IMR-90 (cell line): ENCODE measurements at regions of chr2 and their contacts with region 1.

Region 1: GRCh38 chr2:221429741-221430491 is 142.2 kb downstream of the EPHA4 start:
- DNase-seq: peak; percentile 52
- ATAC-seq: no peak; the same call in 1 of the 2 replicates
- H3K4me3 ChIP-seq: no peak overlapping the region
- H3K27ac ChIP-seq: no peak overlapping the region
- H3K4me1 ChIP-seq: peaks cover 3% of the 10 kb centered on the region; the same call in 1 of the 2 replicates
- H3K27me3 ChIP-seq: no peaks in the 10 kb centered on the region
- CTCF ChIP-seq: no peak
- POLR2A ChIP-seq: no peak
- RAD21 ChIP-seq: no peak

Region 2: DNA sequence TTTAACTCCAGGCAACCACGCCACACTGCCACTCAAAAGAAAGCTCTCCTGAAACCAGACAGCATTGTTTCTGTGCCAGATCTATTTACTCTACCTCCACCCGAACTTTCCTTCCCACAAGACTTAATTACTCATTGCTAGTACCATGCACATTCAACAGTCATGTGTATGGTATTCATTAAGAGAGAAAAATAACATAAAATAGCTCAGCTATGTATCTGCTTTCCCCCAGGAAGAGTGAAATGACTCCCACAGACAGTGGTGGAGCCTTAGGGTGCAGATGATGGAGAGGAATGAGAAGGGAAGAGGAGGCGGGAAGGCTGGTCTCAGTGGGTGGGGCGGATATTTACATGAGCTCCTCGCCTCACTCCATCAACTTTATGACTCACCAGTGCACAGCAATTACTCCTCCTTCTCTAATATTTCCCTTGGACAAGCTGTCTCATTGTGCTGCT is 582.3 kb before region 1 on chr2:
- CTCF ChIA-PET with region 1: no interaction called
- POLR2A ChIA-PET with region 1: no interaction called
- dilution Hi-C with region 1: no loop called
- in situ Hi-C with region 1: no loop called
- intact Hi-C with region 1: loop called (anchors 10 kb)
- DNase-seq: peak; percentile 93
- ATAC-seq: peak; percentile 97
- H3K4me3 ChIP-seq: no peak overlapping the region
- H3K27ac ChIP-seq: no peak overlapping the region
- H3K4me1 ChIP-seq: 0 out of 2 replicates have a peak, but pooled peaks cover 2% of the 10 kb centered on the region
- H3K27me3 ChIP-seq: no peaks in the 10 kb centered on the region
- CTCF ChIP-seq: no peak
- POLR2A ChIP-seq: no peak
- RAD21 ChIP-seq: no peak

Region 3: GRCh38 chr2:221455214-221455613 is 25.3 kb after region 1 on chr2:
- CTCF ChIA-PET with region 1: no interaction called
- POLR2A ChIA-PET with region 1: no interaction called
- dilution Hi-C with region 1: no loop called
- in situ Hi-C with region 1: no loop called
- intact Hi-C with region 1: no loop called
- DNase-seq: peak; percentile 14
- ATAC-seq: no peak
- H3K4me3 ChIP-seq: no peak overlapping the region
- H3K27ac ChIP-seq: no peak overlapping the region
- H3K4me1 ChIP-seq: peaks cover 3% of the 10 kb centered on the region; the same call in 1 of the 2 replicates
- H3K27me3 ChIP-seq: no peaks in the 10 kb centered on the region
- CTCF ChIP-seq: no peak
- POLR2A ChIP-seq: no peak
- RAD21 ChIP-seq: no peak

Region 4: GRCh38 chr2:221494560-221494959 is 64.6 kb after region 1 on chr2:
- CTCF ChIA-PET with region 1: no interaction called
- POLR2A ChIA-PET with region 1: no interaction called
- dilution Hi-C with region 1: no loop called
- in situ Hi-C with region 1: no loop called
- intact Hi-C with region 1: no loop called
- DNase-seq: no peak
- ATAC-seq: no peak
- H3K4me3 ChIP-seq: no peak overlapping the region
- H3K27ac ChIP-seq: no peak overlapping the region
- H3K4me1 ChIP-seq: peaks cover 6% of the 10 kb centered on the region
- H3K27me3 ChIP-seq: no peaks in the 10 kb centered on the region
- CTCF ChIP-seq: no peak
- POLR2A ChIP-seq: no peak
- RAD21 ChIP-seq: no peak